ENCODE measurements at regions of chr17 and their contacts with region 1.

Region 1: GRCh38 chr17:62724398-62725146 is 83.5 kb downstream of the MARCHF10 start:
- DNase-seq: no peak
- ATAC-seq: no peak
- H3K4me3 ChIP-seq: no peak overlapping the region
- H3K27ac ChIP-seq: peak overlapping the region in 1 of 2 experiments; percentile 8; a peak in 1 of 6 replicates
- H3K4me1 ChIP-seq: peaks cover 13% of the 10 kb centered on the region; the same call in 1 of the 3 replicates
- CTCF ChIP-seq: no peak
- EP300 ChIP-seq: no peak
- POLR2A ChIP-seq: no peak
- RAD21 ChIP-seq: no peak

Region 2: DNA sequence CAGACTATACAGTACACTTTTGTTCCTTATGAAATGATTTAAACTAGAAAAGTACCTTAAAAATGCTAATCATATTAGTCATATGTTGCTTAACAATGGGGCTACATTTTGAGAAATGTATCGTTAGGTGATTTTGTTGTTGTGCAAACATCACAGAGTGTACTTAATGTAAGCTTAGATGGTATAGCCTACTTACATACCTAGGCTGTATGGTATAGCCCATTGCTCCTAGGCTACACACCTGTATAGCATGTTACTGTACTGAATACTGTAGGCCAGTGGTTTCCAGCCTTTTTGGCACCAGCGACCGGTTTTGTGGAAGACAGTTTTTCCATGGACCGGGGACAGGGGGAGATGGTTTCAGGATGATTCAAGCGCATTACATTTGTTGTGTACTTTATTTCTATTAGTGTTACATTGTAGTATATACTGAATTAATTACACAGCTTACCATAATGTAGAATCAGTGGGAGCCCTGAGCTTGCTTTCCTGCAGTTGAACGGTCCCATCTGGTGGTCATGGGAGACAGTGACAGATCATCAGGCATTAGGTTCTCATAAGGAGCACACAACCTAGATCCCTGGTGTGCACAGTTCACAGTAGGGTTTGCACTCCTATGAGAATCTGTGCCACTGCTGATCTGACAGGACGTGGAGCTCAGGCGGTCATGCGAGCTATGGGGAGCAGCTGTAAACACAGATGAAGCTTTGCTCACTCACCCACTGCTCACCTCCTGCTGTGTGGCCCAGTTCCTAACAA is 132.1 kb before region 1 on chr17:
- CTCF ChIA-PET with region 1: no interaction called
- POLR2A ChIA-PET with region 1: no interaction called
- DNase-seq: peak in 1 of 2 experiments; percentile 42
- ATAC-seq: peak; percentile 55 to 71; a peak in 3 of 6 replicates
- H3K4me3 ChIP-seq: no peak overlapping the region
- H3K27ac ChIP-seq: no peak overlapping the region
- H3K4me1 ChIP-seq: 0 out of 3 replicates have a peak, but pooled peaks cover 3% of the 10 kb centered on the region
- CTCF ChIP-seq: no peak; the same call in 2 of the 3 replicates
- EP300 ChIP-seq: no peak
- POLR2A ChIP-seq: no peak
- RAD21 ChIP-seq: peak; percentile 20 to 56; a peak in 3 of 5 replicates

Region 3: GRCh38 chr17:62703775-62704378 is 20.7 kb before region 1 on chr17:
- CTCF ChIA-PET with region 1: interaction called, 11 read pairs
- POLR2A ChIA-PET with region 1: interaction called, 3 read pairs
- DNase-seq: peak; percentile 64 to 74
- ATAC-seq: peak; percentile 86 to 93
- H3K4me3 ChIP-seq: peak overlapping the region; percentile 70
- H3K27ac ChIP-seq: peak overlapping the region; percentile 96 to 97
- H3K4me1 ChIP-seq: peaks cover 21% of the 10 kb centered on the region
- CTCF ChIP-seq: peak; percentile 99
- EP300 ChIP-seq: no peak; a peak in 1 of 5 replicates
- POLR2A ChIP-seq: no peak
- RAD21 ChIP-seq: peak; percentile 94 to 100

Region 4: GRCh38 chr17:62714016-62714746 is 10.4 kb before region 1 on chr17:
- CTCF ChIA-PET with region 1: interaction called, 23 read pairs
- POLR2A ChIA-PET with region 1: no interaction called
- DNase-seq: no peak
- ATAC-seq: no peak
- H3K4me3 ChIP-seq: no peak overlapping the region
- H3K27ac ChIP-seq: 0 out of 6 replicates have a peak overlapping the region, but pooled peaks of 1 of the 2 experiments have one; percentile 20
- H3K4me1 ChIP-seq: 0 out of 3 replicates have a peak, but pooled peaks cover 9% of the 10 kb centered on the region
- CTCF ChIP-seq: no peak
- EP300 ChIP-seq: no peak
- POLR2A ChIP-seq: no peak
- RAD21 ChIP-seq: no peak

Measured in A549 (cell line).